ENCODE measurements at regions of chr3 and their contacts with region 1.

Region 1: GRCh38 chr3:196186651-196187573 is 24.3 kb downstream of the ZDHHC19 start:
- DNase-seq: peak; percentile 43
- H3K4me3 ChIP-seq: peak overlapping the region in 1 of 4 donors; percentile 5
- H3K27ac ChIP-seq: peak overlapping the region in 3 of 4 donors; percentile 4 to 54 (median 24)
- H3K4me1 ChIP-seq: peaks cover 9 to 52% (median 17%) of the 10 kb centered on the region in 4 donors
- H3K27me3 ChIP-seq: no peaks in the 10 kb centered on the region
- CTCF ChIP-seq: no peak
- EP300 ChIP-seq: no peak
- POLR2A ChIP-seq: no peak

Region 2: GRCh38 chr3:196079682-196080081 is 107.2 kb before region 1 on chr3:
- in situ Hi-C with region 1: loop called in 3 of 4 experiments (anchors 5 to 10 kb)
- intact Hi-C with region 1: loop called (anchors 5 kb)
- DNase-seq: no peak
- H3K4me3 ChIP-seq: peak overlapping the region in 2 of 4 donors; percentile 85 to 96
- H3K27ac ChIP-seq: peak overlapping the region in 2 of 4 donors; percentile 96 to 98
- H3K4me1 ChIP-seq: peaks cover 0 to 41% (median 33%) of the 10 kb centered on the region in 4 donors
- H3K27me3 ChIP-seq: no peaks in the 10 kb centered on the region
- CTCF ChIP-seq: no peak
- EP300 ChIP-seq: no peak
- POLR2A ChIP-seq: no peak

Region 3: DNA sequence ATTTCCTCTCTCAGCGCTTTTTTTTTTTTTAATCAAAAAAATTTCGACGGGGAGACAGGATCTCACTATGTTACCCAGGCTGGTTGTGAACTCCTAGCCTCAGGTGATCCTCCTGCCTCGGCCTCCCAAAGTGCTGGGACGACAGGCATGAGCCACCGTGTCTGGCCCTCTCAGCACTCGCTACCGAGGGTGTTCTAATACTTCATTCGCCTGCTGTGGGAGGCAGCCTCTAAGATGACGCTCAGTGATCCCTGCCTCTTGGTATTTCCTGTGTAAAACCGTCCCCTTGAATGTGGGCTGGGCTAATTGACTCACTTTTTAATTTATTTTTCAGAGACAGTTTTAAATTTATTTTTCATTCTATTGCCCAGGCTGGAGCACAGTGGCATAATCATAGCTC is 42.2 kb before region 1 on chr3:
- in situ Hi-C with region 1: no loop called
- intact Hi-C with region 1: no loop called
- DNase-seq: no peak
- H3K4me3 ChIP-seq: no peak overlapping the region
- H3K27ac ChIP-seq: no peak overlapping the region
- H3K4me1 ChIP-seq: no peaks in the 10 kb centered on the region
- H3K27me3 ChIP-seq: no peaks in the 10 kb centered on the region
- CTCF ChIP-seq: no peak
- EP300 ChIP-seq: no peak
- POLR2A ChIP-seq: no peak

Region 4: DNA sequence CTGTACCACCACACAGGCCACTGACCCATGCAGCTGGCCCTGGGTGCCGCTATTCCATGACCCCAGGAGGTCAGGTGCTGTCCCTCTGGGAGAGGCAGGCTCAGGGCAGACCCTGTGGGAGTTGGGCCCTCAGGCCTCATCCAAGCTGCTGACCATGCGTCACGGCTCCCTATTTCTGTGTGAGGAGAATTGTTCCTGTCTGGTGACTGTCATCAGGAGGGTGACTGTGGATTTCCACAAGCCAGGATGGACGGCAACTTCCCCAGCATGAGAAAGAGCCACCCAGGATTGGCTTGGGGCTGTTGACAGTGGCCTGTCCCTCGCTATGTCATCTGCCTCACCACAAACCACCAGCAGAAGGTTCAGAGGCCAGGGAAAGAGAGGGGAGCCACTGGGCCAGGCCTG is 17.1 kb before region 1 on chr3:
- in situ Hi-C with region 1: no loop called
- intact Hi-C with region 1: no loop called
- DNase-seq: no peak
- H3K4me3 ChIP-seq: no peak overlapping the region
- H3K27ac ChIP-seq: no peak overlapping the region
- H3K4me1 ChIP-seq: peaks cover 0 to 4% (median 2%) of the 10 kb centered on the region in 4 donors
- H3K27me3 ChIP-seq: no peaks in the 10 kb centered on the region
- CTCF ChIP-seq: no peak
- EP300 ChIP-seq: no peak
- POLR2A ChIP-seq: no peak

Measured in transverse colon (tissue), 4 donors.